Naive thymus-derived CD4-positive, alpha-beta T cell (primary cell): ENCODE measurements at regions of chr7 and their contacts with region 1.

Region 1: GRCh38 chr7:322111-322671 is 32.2 kb downstream of the FOXL3 start:
- DNase-seq: peak; percentile 74 to 98 (median 85)
- ATAC-seq: peak; percentile 100
- H3K4me3 ChIP-seq: no peak overlapping the region
- H3K4me3 Mint-ChIP-seq: no peak overlapping the region
- H3K27ac ChIP-seq: no peak overlapping the region
- H3K27ac Mint-ChIP-seq: no peak overlapping the region
- H3K4me1 ChIP-seq: no peaks in the 10 kb centered on the region
- H3K4me1 Mint-ChIP-seq: peaks cover 0 to 6% (median 0%) of the 10 kb centered on the region in 7 donors
- H3K27me3 ChIP-seq: no peaks in the 10 kb centered on the region
- H3K27me3 Mint-ChIP-seq: peaks cover 15 to 36% (median 23%) of the 10 kb centered on the region in 5 donors

Region 2: GRCh38 chr7:302054-302992 is 19.9 kb before region 1 on chr7:
- CTCF ChIA-PET with region 1: no interaction called
- POLR2A ChIA-PET with region 1: no interaction called
- intact Hi-C with region 1: no loop called
- DNase-seq: no peak
- ATAC-seq: no peak
- H3K4me3 ChIP-seq: no peak overlapping the region
- H3K4me3 Mint-ChIP-seq: no peak overlapping the region
- H3K27ac ChIP-seq: no peak overlapping the region
- H3K27ac Mint-ChIP-seq: no peak overlapping the region
- H3K4me1 ChIP-seq: no peaks in the 10 kb centered on the region
- H3K4me1 Mint-ChIP-seq: no peaks in the 10 kb centered on the region
- H3K27me3 ChIP-seq: no peaks in the 10 kb centered on the region
- H3K27me3 Mint-ChIP-seq: peaks cover 0 to 4% (median 0%) of the 10 kb centered on the region in 5 donors

Region 3: GRCh38 chr7:471866-472639 is 149.9 kb after region 1 on chr7:
- CTCF ChIA-PET with region 1: no interaction called
- POLR2A ChIA-PET with region 1: no interaction called
- intact Hi-C with region 1: no loop called
- DNase-seq: peak in 6 of 9 donors; percentile 6 to 58 (median 44)
- ATAC-seq: peak; percentile 72
- H3K4me3 ChIP-seq: no peak overlapping the region
- H3K4me3 Mint-ChIP-seq: peak overlapping the region in 7 of 10 donors; percentile 12 to 64 (median 62)
- H3K27ac ChIP-seq: no peak overlapping the region
- H3K27ac Mint-ChIP-seq: peak overlapping the region in 5 of 9 donors; percentile 32 to 88 (median 74)
- H3K4me1 ChIP-seq: peaks cover 0 to 12% of the 10 kb centered on the region in 2 donors
- H3K4me1 Mint-ChIP-seq: peaks cover 0 to 28% (median 12%) of the 10 kb centered on the region in 7 donors
- H3K27me3 ChIP-seq: no peaks in the 10 kb centered on the region
- H3K27me3 Mint-ChIP-seq: no peaks in the 10 kb centered on the region

Region 4: GRCh38 chr7:568031-568951 is 246.1 kb after region 1 on chr7:
- CTCF ChIA-PET with region 1: no interaction called
- POLR2A ChIA-PET with region 1: no interaction called
- intact Hi-C with region 1: no loop called
- DNase-seq: no peak
- ATAC-seq: no peak
- H3K4me3 ChIP-seq: no peak overlapping the region
- H3K4me3 Mint-ChIP-seq: no peak overlapping the region
- H3K27ac ChIP-seq: no peak overlapping the region
- H3K27ac Mint-ChIP-seq: no peak overlapping the region
- H3K4me1 ChIP-seq: no peaks in the 10 kb centered on the region
- H3K4me1 Mint-ChIP-seq: no peaks in the 10 kb centered on the region
- H3K27me3 ChIP-seq: no peaks in the 10 kb centered on the region
- H3K27me3 Mint-ChIP-seq: no peaks in the 10 kb centered on the region

Region 5: DNA sequence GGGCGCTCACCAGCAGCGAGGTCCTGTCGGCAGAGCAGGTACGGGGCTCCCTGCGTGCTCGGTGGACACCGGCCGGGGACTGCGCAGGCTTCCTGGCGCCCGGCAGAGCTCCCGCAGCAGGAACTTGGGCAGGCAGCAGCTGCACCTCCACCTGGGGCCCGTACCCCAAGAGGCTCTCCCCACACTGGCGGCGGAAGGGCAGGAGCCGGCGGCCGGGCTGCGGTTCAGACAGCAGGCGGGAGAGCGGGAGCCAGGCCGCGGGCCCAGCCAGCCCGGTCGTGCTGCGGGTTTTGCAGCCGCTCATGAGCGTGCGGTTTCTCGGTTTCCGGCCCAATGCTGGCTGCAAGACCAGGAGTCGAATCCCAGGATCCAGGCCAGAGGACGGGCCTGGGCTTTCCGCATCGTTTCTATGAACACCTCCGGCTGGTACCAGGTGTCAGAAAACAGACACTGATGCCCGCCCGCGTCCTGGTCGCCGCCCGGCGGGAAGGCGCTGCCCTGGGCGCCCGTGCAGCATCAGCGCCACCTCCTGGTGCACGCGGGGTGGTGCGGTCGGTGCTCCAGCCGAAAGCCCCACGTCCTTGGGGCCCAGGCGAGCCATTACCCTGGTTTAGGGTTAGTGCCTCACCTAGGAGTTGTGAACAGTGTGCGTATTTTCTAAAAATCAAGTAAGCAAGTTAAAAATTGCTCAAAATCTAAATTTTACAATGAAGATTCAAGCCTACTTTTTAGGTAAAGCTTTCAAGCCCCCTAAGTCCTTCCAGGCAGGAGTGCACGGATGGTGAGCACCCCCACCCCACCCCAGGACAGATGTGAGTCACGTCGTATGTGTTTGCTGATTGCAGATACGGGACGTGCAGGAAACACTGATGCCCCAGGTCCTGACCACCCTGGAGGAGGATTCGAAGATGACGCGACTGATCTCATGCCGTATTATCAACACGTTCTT is 452.2 kb after region 1 on chr7:
- CTCF ChIA-PET with region 1: interaction called, 4 read pairs
- POLR2A ChIA-PET with region 1: no interaction called
- intact Hi-C with region 1: loop called (anchors 1 kb)
- DNase-seq: peak; percentile 38 to 79 (median 62)
- ATAC-seq: peak; percentile 84
- H3K4me3 ChIP-seq: no peak overlapping the region
- H3K4me3 Mint-ChIP-seq: no peak overlapping the region
- H3K27ac ChIP-seq: no peak overlapping the region
- H3K27ac Mint-ChIP-seq: no peak overlapping the region
- H3K4me1 ChIP-seq: no peaks in the 10 kb centered on the region
- H3K4me1 Mint-ChIP-seq: no peaks in the 10 kb centered on the region
- H3K27me3 ChIP-seq: no peaks in the 10 kb centered on the region
- H3K27me3 Mint-ChIP-seq: no peaks in the 10 kb centered on the region